Activated CD8-positive, alpha-beta T cell treated with anti-CD3 and anti-CD28 coated beads for 36 hours (primary cell): ENCODE measurements at regions of chr15 and their contacts with region 1.

Region 1: DNA sequence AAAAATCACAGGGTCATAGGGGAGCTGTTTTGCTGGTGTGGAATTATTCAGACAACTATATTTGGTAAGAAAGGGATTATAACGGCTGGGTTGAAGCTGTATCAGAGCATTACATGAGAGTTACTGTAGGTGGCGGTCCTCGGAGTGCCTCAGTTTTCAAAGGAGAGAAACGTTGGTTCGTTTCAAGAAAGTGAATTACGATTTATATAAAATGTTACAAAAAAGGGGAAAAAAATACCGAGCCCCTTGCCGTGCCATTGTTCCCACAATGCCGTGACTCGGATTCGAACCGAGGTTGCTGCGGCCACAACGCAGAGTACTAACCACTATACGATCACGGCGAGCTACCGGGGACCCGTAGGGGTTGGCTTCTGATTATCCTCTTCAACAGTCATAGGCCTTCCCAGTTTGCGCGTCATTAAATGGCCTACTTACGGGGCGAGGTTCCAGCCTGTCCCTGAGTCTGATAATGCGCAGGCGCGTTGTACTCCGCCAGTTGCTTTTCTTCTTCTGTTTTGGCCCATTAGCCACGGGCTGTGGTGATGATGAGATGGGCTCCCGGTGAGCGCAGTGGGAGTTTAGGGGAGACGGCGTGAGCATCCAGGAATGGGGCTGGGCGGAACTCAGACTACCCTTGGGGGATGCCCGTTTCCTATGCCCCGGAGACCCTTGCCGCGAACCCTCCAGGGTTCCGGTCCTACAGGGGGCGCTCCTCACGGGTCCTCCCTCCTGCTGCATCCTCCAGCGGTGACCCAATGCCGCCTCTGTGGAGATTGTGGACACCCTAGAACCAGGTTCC is 10.8 kb upstream of the SHF start:
- DNase-seq: peak; percentile 95
- ATAC-seq: peak; percentile 66
- H3K4me3 Mint-ChIP-seq: no peak overlapping the region
- H3K27ac Mint-ChIP-seq: no peak overlapping the region
- H3K4me1 Mint-ChIP-seq: peaks cover 8% of the 10 kb centered on the region
- H3K27me3 Mint-ChIP-seq: peaks cover 3% of the 10 kb centered on the region
- CTCF ChIP-seq: peak; percentile 68

Region 2: DNA sequence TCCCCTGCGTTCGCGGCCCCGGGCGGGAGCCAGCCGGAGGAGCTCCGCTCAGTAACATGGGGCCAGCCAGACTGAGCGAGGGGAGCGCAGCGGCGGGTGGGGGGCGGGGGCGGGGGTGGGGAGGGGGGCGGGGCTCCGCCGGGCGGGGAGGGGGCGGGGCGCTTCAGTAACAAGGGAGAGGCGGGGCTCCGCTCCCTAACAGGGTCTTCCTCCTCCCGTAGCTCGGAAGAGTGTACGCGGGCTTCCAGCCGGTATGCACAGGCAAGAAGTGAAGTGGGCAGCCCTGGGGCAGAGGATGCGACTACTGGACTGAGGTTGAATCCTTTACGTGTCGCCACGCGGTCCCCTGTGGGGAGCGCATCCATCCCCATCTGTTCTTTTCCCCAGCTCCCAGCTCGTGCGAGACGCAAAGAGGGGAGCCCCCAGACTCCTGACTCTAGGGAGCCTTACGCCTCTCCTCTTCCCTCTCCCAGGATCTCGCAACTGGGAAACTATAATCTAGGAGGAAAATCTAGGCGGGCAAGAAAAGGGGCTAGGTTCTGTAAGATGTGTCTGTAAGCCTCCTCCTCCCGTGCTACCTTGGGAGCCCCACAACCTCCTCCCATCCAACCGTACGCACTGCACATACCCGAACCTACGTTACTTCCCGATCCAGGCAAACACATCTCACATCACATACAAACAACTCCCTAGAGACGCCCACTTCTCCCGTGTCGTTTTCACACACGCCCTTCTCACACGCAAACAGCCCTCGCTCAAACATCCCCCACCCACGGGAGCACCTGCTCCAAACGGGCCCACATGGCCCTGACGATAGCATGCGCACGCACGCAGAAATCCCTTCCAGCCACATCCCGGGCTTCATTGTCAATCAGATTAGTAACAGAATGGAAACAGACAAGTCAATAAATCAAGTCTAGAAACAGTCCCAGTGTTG is 10.4 kb before region 1 on chr15 and contains the start of gene SHF:
- CTCF ChIA-PET with region 1: interaction called, 11 read pairs
- POLR2A ChIA-PET with region 1: interaction called, 85 read pairs
- intact Hi-C with region 1: no loop called
- DNase-seq: peak; percentile 92
- ATAC-seq: peak; percentile 81
- H3K4me3 Mint-ChIP-seq: peak within 1 kb of the TSS; percentile 77
- H3K27ac Mint-ChIP-seq: peak within 1 kb of the TSS; percentile 92
- H3K4me1 Mint-ChIP-seq: peaks cover 28% of the 10 kb centered on the region
- H3K27me3 Mint-ChIP-seq: no peaks in the 10 kb centered on the region
- CTCF ChIP-seq: no peak
- total RNA-seq, gene SHF: 19.8 to 23.5 TPM

Region 3: DNA sequence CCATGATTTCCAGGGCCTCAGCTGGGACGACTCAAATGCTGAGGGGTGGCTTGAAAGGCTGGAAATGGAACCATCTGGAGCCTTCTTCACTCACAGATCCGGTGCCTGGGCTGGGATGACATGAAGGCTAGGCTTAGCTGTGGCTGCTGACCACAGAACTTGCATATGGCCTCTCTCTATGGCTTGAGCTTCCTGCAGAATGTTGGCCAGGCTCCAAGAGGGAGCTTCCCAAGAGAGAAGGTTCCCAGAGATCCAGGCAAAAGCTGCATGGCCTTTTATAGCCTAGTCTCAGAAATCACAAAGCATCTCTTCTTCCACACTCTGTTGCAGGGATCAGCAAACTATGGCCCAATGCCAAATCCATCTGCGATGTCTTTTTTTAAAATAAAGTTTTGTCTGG is 135.0 kb after region 1 on chr15:
- CTCF ChIA-PET with region 1: no interaction called
- POLR2A ChIA-PET with region 1: no interaction called
- intact Hi-C with region 1: no loop called
- DNase-seq: no peak
- ATAC-seq: no peak
- H3K4me3 Mint-ChIP-seq: no peak overlapping the region
- H3K27ac Mint-ChIP-seq: no peak overlapping the region
- H3K4me1 Mint-ChIP-seq: peaks cover 6% of the 10 kb centered on the region
- H3K27me3 Mint-ChIP-seq: peaks cover 3% of the 10 kb centered on the region
- CTCF ChIP-seq: no peak

Region 4: GRCh38 chr15:45468294-45468693 is 269.8 kb after region 1 on chr15:
- CTCF ChIA-PET with region 1: no interaction called
- POLR2A ChIA-PET with region 1: no interaction called
- intact Hi-C with region 1: no loop called
- DNase-seq: no peak
- ATAC-seq: no peak
- H3K4me3 Mint-ChIP-seq: no peak overlapping the region
- H3K27ac Mint-ChIP-seq: no peak overlapping the region
- H3K4me1 Mint-ChIP-seq: peaks cover 2% of the 10 kb centered on the region
- H3K27me3 Mint-ChIP-seq: peaks cover 21% of the 10 kb centered on the region
- CTCF ChIP-seq: no peak